AG04450 (cell line): ENCODE measurements at regions of chr11 and their contacts with region 1.

Region 1: DNA sequence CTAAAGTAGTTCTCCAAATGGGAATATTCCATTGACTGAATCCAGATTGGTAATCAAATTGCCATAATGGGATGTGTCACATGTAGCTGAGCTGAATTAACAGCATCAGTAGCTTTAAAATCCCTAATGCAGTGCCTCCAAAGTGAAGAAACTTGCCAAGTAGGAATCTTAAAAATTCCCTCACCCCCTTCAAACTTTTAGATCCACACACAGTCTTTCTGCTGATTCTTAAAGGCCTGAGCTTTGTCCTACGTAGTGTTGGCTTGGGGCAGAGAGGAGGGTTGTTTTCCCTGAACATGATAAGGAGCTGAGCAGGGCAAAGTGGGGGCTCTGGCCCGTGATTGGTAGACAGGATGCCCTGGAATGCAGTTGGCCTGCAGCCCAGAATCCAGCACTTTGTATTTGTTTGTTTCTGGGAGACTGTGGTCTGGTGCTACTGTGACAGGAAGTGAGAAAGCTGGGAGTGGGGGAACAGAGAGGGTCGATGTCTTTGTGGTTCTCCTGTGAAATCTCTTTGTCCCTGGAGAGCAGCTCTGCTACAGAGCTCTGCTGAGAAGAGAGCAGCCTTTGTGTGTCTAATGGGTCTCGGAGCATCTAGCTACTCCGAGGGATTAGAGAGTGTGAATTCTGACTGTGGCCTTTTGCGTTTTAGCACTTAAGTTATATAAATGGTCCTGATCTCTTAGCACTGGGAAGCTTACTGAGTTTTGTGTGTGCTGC is 16.9 kb downstream of the CTNND1 start:
- DNase-seq: peak; percentile 95
- H3K4me3 ChIP-seq: peak overlapping the region; percentile 10
- H3K27ac ChIP-seq: peak overlapping the region; percentile 95
- H3K27me3 ChIP-seq: no peaks in the 10 kb centered on the region
- CTCF ChIP-seq: no peak

Region 2: DNA sequence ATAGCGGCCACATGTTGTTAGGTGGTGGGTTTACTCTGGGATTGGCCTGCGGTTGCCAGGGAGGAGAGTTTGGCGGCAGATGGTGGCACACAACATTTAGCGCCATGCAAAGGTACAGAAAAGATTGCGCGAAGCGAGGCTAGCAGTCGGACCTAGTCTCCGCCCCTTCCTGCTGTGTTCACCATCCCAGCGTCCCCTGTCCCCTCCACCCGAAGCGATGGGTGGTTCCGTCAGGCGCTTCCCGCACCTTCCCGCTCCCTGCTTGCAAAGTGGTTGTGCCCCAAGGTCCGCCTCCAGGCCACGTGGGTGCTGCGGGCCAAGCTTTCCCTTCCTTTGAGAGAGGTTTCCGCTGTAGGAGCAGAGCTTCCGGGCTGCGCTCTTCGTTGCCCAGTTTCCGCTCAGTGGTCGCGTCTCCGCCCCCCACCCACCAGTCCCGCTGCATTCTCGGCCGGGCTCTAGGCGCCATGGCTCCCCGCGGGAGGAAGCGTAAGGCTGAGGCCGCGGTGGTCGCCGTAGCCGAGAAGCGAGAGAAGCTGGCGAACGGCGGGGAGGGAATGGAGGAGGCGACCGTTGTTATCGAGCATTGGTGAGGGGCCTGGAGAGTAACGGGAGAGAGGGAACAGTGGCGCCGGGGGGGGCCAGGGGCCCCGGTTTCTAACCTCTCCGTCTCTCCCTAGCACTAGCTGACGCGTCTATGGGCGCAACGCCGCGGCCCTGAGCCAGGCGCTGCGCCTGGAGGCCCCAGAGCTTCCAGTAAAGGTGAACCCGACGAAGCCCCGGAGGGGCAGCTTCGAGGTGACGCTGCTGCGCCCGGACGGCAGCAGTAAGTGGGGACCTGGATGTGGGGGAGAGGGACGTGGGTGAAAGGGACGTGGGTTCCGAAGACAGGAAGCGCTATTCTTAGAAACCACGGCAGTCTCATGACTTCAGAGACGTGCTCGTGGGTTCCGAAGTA is 37.1 kb before region 1 on chr11 and contains the start of gene SELENOH:
- CTCF ChIA-PET with region 1: no interaction called
- POLR2A ChIA-PET with region 1: interaction called, 13 read pairs
- DNase-seq: peak; percentile 94
- H3K4me3 ChIP-seq: peak within 1 kb of the TSS; percentile 96
- H3K27ac ChIP-seq: peak within 1 kb of the TSS; percentile 89
- H3K27me3 ChIP-seq: no peaks in the 10 kb centered on the region
- CTCF ChIP-seq: no peak
- polyA plus RNA-seq, gene SELENOH: 94.8 and 104 TPM in 2 replicates

Region 3: DNA sequence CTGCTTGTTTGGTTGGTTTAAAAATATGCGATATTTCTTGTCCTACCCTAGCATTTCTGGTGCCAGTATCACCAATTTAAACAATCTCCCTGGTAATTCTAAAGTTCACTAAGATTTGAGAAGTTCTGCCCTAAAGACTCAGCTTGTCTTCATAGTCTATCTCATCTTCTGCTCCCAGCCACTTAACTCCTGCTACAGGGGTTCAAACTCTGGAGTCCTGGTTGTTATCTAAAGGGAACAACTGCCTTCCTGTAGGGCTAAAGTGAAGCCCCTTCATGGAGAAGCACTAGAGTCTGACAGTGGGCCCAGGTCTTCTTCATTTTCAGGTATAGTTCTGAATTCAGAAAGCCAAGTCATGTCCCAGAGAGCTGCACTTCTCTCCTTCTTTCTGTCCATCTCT is 56.4 kb after region 1 on chr11:
- CTCF ChIA-PET with region 1: no interaction called
- POLR2A ChIA-PET with region 1: no interaction called
- DNase-seq: no peak
- H3K4me3 ChIP-seq: no peak overlapping the region
- H3K27ac ChIP-seq: no peak overlapping the region
- H3K27me3 ChIP-seq: no peaks in the 10 kb centered on the region
- CTCF ChIP-seq: no peak

Region 4: GRCh38 chr11:57983191-57983590 is 204.7 kb after region 1 on chr11:
- CTCF ChIA-PET with region 1: no interaction called
- POLR2A ChIA-PET with region 1: no interaction called
- DNase-seq: no peak
- H3K4me3 ChIP-seq: no peak overlapping the region
- H3K27ac ChIP-seq: no peak overlapping the region
- H3K27me3 ChIP-seq: no peaks in the 10 kb centered on the region
- CTCF ChIP-seq: no peak

Region 5: GRCh38 chr11:58222721-58223120 is 444.2 kb after region 1 on chr11:
- CTCF ChIA-PET with region 1: no interaction called
- POLR2A ChIA-PET with region 1: no interaction called
- DNase-seq: no peak
- H3K4me3 ChIP-seq: no peak overlapping the region
- H3K27ac ChIP-seq: no peak overlapping the region
- H3K27me3 ChIP-seq: no peaks in the 10 kb centered on the region
- CTCF ChIP-seq: no peak

Region 6: GRCh38 chr11:58406774-58407173 is 628.3 kb after region 1 on chr11 and contains the start of gene OR5B3:
- CTCF ChIA-PET with region 1: no interaction called
- POLR2A ChIA-PET with region 1: no interaction called
- DNase-seq: no peak
- H3K4me3 ChIP-seq: no peak within 1 kb of the TSS
- H3K27ac ChIP-seq: no peak within 1 kb of the TSS
- H3K27me3 ChIP-seq: no peaks in the 10 kb centered on the region
- CTCF ChIP-seq: no peak
- polyA plus RNA-seq, gene OR5B3: not detected in 2 replicates